ENCODE measurements at regions of chr12 and their contacts with region 1.

Region 1: DNA sequence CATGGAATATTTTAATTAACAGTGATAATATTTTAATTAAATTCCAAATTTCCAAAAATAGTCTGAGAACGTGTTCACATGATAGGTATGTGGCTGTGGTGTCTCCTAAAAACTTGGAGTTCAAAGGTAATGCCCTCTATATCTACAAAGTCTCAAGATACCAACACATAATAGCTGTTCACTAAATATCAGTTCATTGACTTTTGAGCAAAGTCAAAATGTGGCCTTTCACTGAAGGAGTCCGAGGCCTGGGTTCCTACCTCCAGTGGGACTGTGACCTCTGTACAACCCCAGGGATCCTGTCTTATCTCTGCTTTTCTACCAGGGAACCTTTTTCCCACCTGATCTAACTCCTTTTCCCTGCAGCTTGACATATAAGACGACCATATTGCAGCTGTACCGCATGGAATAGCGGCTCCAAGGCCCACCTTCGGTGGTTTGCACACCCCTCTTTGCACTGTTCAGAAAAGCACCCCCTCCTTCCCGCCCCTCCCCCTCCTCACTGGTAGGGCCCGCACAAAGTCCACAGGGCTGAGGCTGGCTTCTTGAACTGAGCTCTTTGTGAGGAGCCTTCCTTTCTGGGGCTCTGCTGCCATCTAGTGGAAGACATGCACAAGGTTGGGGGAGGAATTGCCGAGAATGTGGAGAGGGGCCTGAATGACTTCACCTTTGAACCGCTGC is 3.1 kb downstream of the CCND2 start:
- DNase-seq: peak; percentile 87
- ATAC-seq: peak; percentile 36 to 47

Region 2: GRCh38 chr12:3885277-3886094 is 391.2 kb before region 1 on chr12:
- intact Hi-C with region 1: loop called (anchors 2 to 10 kb)
- DNase-seq: no peak
- ATAC-seq: peak in 1 of 2 donors; percentile 27

Region 3: DNA sequence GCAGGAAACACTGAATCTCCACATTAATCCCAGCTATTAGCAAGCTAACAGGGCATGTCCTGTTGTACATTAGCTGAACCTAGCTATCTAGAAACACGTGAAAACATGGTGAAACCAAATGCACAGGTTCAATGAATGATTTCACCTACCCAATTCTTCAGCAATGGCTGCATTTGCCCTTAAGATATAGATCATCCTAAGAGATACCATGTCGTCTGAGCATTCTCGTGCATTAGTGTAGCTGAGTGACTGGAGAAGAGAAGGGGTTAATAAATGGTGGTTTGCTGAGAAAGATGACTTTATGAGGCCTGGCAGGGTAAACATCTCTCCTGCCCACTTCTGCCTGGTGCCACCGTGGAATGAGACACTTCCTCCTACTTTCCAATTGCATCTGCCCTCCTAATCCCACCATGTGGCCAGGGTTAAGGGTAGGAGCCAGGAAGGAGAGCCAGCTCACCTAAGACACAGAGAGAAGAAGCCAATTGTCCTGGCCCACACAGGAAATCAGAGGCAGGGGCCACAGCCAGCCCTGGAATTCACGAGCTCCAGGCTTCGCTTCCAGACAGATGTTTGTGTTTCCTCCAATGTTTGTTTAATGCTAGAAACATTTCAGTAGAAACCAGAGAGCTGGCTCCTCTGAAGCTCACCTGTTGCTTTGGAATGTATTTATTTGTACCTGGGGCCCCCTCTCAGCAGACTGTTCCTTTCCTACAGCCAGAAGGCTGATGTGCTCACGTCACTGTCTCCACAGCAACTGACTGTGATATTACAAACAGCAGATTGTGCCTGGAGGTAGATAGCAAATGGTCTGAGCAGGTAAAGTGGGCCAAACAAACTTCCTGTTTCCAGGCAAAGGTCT is 277.5 kb before region 1 on chr12:
- intact Hi-C with region 1: loop called (anchors 2 to 10 kb)
- DNase-seq: no peak
- ATAC-seq: peak in 1 of 2 donors; percentile 80

Region 4: DNA sequence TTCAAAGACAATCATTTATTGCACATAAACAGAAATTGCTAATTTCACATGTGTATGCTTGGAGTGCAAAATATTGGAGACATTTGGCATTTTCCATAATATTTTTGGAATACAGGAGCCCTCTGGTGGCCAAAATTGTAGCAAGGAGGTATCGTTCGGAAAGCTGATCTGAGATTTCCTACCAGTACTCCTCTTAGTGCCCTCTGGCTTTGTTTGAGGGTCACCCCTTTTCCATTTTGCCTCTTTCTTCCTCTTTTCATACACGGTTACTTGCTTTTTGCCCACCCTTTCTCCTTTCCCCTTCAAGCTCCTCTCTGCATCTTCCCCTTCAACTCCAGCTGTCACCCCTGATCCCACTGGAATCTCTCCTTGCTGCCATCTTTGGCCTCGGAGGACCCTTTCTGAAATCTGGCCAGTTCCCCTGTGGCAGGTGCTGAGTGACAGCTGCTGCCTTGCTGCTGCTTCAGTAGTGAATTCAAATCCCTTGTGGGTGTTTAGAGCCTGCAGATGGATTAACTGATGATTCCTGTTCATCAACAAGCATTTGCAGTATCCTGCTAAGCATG is 238.8 kb before region 1 on chr12:
- intact Hi-C with region 1: loop called in 1 of 2 experiments (anchors 5 kb)
- DNase-seq: peak; percentile 39
- ATAC-seq: peak; percentile 58 to 74

Region 5: DNA sequence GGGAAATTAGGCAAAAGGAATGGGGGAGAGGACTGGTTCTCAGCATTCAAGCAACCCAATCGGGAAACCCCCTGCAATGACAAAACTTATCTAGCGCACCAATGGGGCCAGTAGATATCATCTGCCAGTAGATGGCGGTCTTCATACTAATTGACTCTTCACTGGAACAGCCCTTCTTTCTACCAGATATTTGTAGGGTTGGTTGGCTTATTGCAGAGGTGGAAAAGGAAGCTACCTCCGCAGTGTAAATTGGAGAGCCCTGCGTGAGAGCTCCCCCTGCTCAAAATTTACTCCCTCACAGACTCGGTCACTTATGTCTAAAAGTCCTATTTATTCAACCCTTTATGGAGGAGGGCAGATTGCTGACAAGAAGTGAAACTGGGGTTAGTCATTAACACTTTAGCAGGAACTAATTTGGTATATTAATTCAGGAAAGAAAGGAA is 169.2 kb before region 1 on chr12:
- intact Hi-C with region 1: loop called in 1 of 2 experiments (anchors 2 kb)
- DNase-seq: no peak
- ATAC-seq: peak; percentile 85 to 86

Region 6: DNA sequence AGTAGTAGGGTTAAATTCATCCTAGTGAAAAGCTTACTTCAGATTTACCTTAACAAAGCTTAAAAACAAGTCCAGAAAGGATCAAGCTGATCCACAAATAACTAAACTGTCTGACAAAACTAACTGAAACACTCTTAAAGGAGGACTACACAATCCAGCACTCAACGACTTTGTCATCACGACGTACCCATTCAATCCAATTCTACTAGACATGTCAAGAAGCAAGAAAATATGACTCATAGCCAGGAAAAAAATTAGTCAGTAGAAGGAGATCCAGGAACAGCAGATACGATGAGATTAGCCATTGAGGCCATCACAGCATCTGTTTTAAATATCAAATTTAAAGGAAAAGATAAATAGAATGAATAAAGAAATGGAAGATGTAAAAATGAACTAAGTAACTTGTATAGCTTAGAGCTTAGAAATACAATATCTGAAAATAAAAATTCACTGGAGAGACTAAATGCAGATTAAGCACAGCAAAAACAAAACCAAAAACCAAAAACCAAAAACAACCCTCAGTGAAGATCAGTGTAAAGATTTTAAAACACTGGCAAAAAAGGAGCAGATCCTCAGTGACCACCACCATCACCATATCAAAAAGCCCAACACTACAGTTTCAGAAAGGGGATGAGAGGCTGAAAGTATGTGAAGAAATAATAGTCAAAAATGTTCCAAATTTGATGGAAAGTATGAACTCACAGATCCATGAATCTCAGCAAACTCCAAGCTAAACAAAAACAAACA is 98.1 kb before region 1 on chr12:
- intact Hi-C with region 1: no loop called
- DNase-seq: no peak
- ATAC-seq: no peak

Measured in left cardiac atrium (tissue), 4 donors.